Activated T-helper 2 cell treated with anti-CD3 and anti-CD28 coated beads, Interferon-gamma antibody, Interleukin-2, Interleukin-4, amounts not matched to agents 10 μg/mL and 5 μg/mL and 100 μg/mL, durations not matched to agents 14 hours and 24 hours and 36 hours (primary cell): ENCODE measurements at regions of chr9 and their contacts with region 1.

Region 1: GRCh38 chr9:6055213-6055612 is 39.8 kb upstream of the RANBP6 start:
- DNase-seq: peak; percentile 22
- H3K4me3 Mint-ChIP-seq: no peak overlapping the region
- H3K27ac Mint-ChIP-seq: no peak overlapping the region
- H3K4me1 Mint-ChIP-seq: peaks cover 2% of the 10 kb centered on the region
- H3K27me3 Mint-ChIP-seq: peaks cover 13% of the 10 kb centered on the region

Region 2: GRCh38 chr9:6305954-6306563 is 250.8 kb after region 1 on chr9:
- intact Hi-C with region 1: loop called (anchors 1 kb)
- DNase-seq: no peak
- H3K4me3 Mint-ChIP-seq: no peak overlapping the region
- H3K27ac Mint-ChIP-seq: no peak overlapping the region
- H3K4me1 Mint-ChIP-seq: no peaks in the 10 kb centered on the region
- H3K27me3 Mint-ChIP-seq: peaks cover 22% of the 10 kb centered on the region

Region 3: DNA sequence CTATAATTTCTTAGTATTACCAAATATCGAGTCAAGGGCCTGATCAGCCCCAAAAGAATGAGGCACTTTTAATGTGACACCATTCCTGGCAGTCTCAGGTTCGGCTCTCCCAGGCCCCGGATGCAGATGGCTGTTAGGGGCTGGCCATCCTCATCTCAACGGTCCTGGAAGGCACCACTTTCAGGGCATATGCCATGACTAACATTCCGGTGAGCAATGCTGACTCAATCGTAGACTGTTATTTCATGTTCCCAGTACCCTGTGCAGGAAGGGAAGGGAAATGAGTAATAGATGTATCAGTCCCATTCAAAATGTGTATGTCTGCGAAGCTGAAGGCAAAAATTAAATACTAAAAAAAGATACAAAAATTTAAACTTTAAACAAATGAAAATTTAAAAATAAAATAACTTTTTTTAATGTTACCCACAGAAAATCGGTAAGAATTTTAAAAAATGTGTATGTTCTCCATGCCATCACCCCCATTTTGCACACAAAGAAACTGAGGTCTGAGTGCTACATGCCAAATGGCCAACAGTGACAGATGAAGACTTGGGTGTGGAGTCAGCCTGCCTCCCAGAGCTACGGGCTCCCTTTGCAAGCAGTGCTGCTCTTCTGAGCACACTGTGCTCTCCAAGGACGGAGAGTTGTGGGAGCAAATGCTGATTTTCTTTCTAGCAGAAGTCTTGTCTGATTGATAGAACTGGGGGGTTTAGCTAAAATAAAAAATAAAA is 511.4 kb after region 1 on chr9:
- intact Hi-C with region 1: loop called (anchors 1 kb)
- DNase-seq: peak; percentile 19
- H3K4me3 Mint-ChIP-seq: peak overlapping the region; percentile 33
- H3K27ac Mint-ChIP-seq: peak overlapping the region; percentile 82
- H3K4me1 Mint-ChIP-seq: peaks cover 19% of the 10 kb centered on the region
- H3K27me3 Mint-ChIP-seq: peaks cover 5% of the 10 kb centered on the region